GM12878 (cell line): ENCODE measurements at regions of chr2 and their contacts with region 1.

Region 1: GRCh38 chr2:60806988-60807681 is 51.1 kb downstream of the PAPOLG start:
- DNase-seq: peak; percentile 75
- ATAC-seq: peak; percentile 90
- H3K4me3 ChIP-seq: no peak overlapping the region
- H3K27ac ChIP-seq: peak overlapping the region; percentile 76
- H3K4me1 ChIP-seq: peaks cover 28% of the 10 kb centered on the region
- H3K27me3 ChIP-seq: no peaks in the 10 kb centered on the region
- CTCF ChIP-seq: no peak
- EP300 ChIP-seq: 0 out of 4 replicates have a peak, but pooled peaks of 1 of the 2 experiments have one; percentile 41
- POLR2A ChIP-seq: 0 out of 2 replicates have a peak, but pooled peaks have one; percentile 6
- RAD21 ChIP-seq: 0 out of 2 replicates have a peak, but pooled peaks have one; percentile 1

Region 2: GRCh38 chr2:60735496-60736250 is 71.5 kb before region 1 on chr2:
- CTCF ChIA-PET with region 1: no interaction called
- POLR2A ChIA-PET with region 1: no interaction called
- RAD21 ChIA-PET with region 1: no interaction called
- SMC1A ChIA-PET with region 1: no interaction called
- in situ Hi-C with region 1: no loop called
- intact Hi-C with region 1: no loop called
- DNase-seq: no peak
- ATAC-seq: peak; percentile 33
- H3K4me3 ChIP-seq: peak overlapping the region; percentile 28; the same call in 1 of the 2 replicates
- H3K27ac ChIP-seq: no peak overlapping the region
- H3K4me1 ChIP-seq: no peaks in the 10 kb centered on the region
- H3K27me3 ChIP-seq: peaks cover 1 to 9% of the 10 kb centered on the region in 2 experiments; a peak in 3 of 4 replicates
- CTCF ChIP-seq: no peak
- EP300 ChIP-seq: no peak
- POLR2A ChIP-seq: no peak
- RAD21 ChIP-seq: no peak

Region 3: GRCh38 chr2:60794277-60794863 is 12.8 kb before region 1 on chr2:
- CTCF ChIA-PET with region 1: interaction called, 8 read pairs
- POLR2A ChIA-PET with region 1: no interaction called
- RAD21 ChIA-PET with region 1: interaction called, 12 read pairs
- SMC1A ChIA-PET with region 1: interaction called, 14 read pairs
- in situ Hi-C with region 1: no loop called
- intact Hi-C with region 1: no loop called
- DNase-seq: no peak
- ATAC-seq: peak; percentile 51; the same call in 2 of the 3 replicates
- H3K4me3 ChIP-seq: no peak overlapping the region
- H3K27ac ChIP-seq: no peak overlapping the region
- H3K4me1 ChIP-seq: peaks cover 16% of the 10 kb centered on the region
- H3K27me3 ChIP-seq: no peaks in the 10 kb centered on the region
- CTCF ChIP-seq: peak; percentile 33 to 73 (median 55); a peak in 4 of 6 replicates
- EP300 ChIP-seq: no peak
- POLR2A ChIP-seq: no peak
- RAD21 ChIP-seq: peak; percentile 81

Region 4: GRCh38 chr2:60818272-60818671 is 11.1 kb after region 1 on chr2:
- CTCF ChIA-PET with region 1: interaction called, 19 read pairs
- POLR2A ChIA-PET with region 1: interaction called, 4 read pairs
- RAD21 ChIA-PET with region 1: interaction called, 6 read pairs
- SMC1A ChIA-PET with region 1: interaction called, 14 read pairs
- in situ Hi-C with region 1: no loop called
- intact Hi-C with region 1: no loop called
- DNase-seq: no peak
- ATAC-seq: peak; percentile 52
- H3K4me3 ChIP-seq: no peak overlapping the region
- H3K27ac ChIP-seq: no peak overlapping the region
- H3K4me1 ChIP-seq: no peaks in the 10 kb centered on the region; the same call in 1 of the 2 replicates
- H3K27me3 ChIP-seq: no peaks in the 10 kb centered on the region
- CTCF ChIP-seq: peak in 2 of 3 experiments; percentile 35 to 37; a peak in 4 of 6 replicates
- EP300 ChIP-seq: no peak
- POLR2A ChIP-seq: no peak
- RAD21 ChIP-seq: peak; percentile 55

Region 5: DNA sequence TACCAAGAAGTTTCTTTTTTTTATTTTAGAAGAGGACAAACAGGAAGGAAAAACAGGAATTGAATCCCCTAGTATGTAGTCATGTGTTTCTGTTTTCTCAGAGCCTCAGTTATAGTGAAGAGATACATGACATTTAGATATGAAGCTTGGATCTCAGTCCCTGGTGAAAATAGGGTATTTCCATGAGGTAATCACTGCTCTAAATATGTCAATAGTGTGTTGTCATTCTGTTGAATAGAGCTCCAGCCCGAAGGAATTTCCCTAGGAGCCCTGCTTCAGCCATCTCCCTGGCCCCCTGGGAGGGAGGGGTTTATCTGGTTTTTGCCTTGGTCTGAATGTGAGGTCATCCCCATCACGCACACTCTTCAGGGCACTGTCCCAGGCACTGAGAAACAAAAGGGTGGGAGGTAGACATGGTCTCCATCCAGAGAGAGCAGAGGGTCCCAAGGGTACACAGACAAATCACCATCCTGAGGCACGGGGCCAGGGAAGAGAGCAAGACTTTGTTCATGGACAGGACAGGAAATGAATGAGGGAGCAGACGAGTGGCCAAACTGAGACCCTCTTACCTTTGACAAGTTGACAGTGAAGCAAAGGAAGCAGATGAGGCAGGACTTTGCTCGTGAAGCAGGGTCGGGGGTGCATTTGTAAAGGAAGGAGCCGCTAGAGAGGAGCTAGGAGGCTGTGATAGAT is 27.3 kb after region 1 on chr2:
- CTCF ChIA-PET with region 1: interaction called, 14 read pairs
- POLR2A ChIA-PET with region 1: interaction called, 12 read pairs
- RAD21 ChIA-PET with region 1: interaction called, 19 read pairs
- SMC1A ChIA-PET with region 1: interaction called, 10 read pairs
- in situ Hi-C with region 1: no loop called
- intact Hi-C with region 1: loop called (anchors 1 kb)
- DNase-seq: peak; percentile 63
- ATAC-seq: peak; percentile 74
- H3K4me3 ChIP-seq: no peak overlapping the region
- H3K27ac ChIP-seq: peak overlapping the region; percentile 63
- H3K4me1 ChIP-seq: peaks cover 68% of the 10 kb centered on the region
- H3K27me3 ChIP-seq: no peaks in the 10 kb centered on the region
- CTCF ChIP-seq: no peak
- EP300 ChIP-seq: peak; percentile 47 to 79; a peak in 2 of 4 replicates
- POLR2A ChIP-seq: no peak
- RAD21 ChIP-seq: peak; percentile 16; the same call in 1 of the 2 replicates

Region 6: DNA sequence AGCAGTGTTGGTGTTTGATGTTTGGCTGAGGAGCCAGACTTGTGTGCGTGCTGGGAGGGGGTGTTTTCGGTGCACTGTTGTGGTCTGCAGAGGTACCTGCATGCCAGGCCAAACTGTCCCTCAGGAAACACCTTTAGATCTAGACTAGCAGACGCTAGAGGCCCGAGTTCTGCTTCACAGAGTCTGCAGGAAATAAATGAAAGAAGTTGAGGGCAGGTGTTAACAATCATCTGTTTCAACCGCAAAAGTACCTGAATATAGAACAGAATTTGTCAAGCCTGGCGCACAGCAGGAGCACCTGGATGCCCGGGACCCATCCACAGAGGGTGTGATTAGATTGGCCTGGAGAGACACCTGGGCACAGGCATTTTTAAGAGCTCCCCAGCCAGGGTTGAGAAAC is 33.7 kb after region 1 on chr2:
- CTCF ChIA-PET with region 1: interaction called, 14 read pairs
- POLR2A ChIA-PET with region 1: interaction called, 4 read pairs
- RAD21 ChIA-PET with region 1: interaction called, 19 read pairs
- SMC1A ChIA-PET with region 1: interaction called, 10 read pairs
- in situ Hi-C with region 1: no loop called
- intact Hi-C with region 1: no loop called
- DNase-seq: peak; percentile 86
- ATAC-seq: peak; percentile 63
- H3K4me3 ChIP-seq: peak overlapping the region; percentile 38; the same call in 1 of the 2 replicates
- H3K27ac ChIP-seq: peak overlapping the region; percentile 92
- H3K4me1 ChIP-seq: peaks cover 91% of the 10 kb centered on the region
- H3K27me3 ChIP-seq: no peaks in the 10 kb centered on the region
- CTCF ChIP-seq: no peak
- EP300 ChIP-seq: peak; percentile 30 to 54; a peak in 1 of 4 replicates
- POLR2A ChIP-seq: no peak
- RAD21 ChIP-seq: 0 out of 2 replicates have a peak, but pooled peaks have one; percentile 17

Region 7: GRCh38 chr2:60891180-60891579 is 84.0 kb after region 1 on chr2:
- CTCF ChIA-PET with region 1: interaction called, 3 read pairs
- POLR2A ChIA-PET with region 1: interaction called, 3 read pairs
- RAD21 ChIA-PET with region 1: interaction called, 5 read pairs
- SMC1A ChIA-PET with region 1: interaction called, 13 read pairs
- in situ Hi-C with region 1: no loop called
- intact Hi-C with region 1: no loop called
- DNase-seq: no peak
- ATAC-seq: peak; percentile 54
- H3K4me3 ChIP-seq: no peak overlapping the region
- H3K27ac ChIP-seq: no peak overlapping the region
- H3K4me1 ChIP-seq: peaks cover 9% of the 10 kb centered on the region
- H3K27me3 ChIP-seq: no peaks in the 10 kb centered on the region
- CTCF ChIP-seq: no peak
- EP300 ChIP-seq: no peak
- POLR2A ChIP-seq: no peak
- RAD21 ChIP-seq: no peak

Region 8: DNA sequence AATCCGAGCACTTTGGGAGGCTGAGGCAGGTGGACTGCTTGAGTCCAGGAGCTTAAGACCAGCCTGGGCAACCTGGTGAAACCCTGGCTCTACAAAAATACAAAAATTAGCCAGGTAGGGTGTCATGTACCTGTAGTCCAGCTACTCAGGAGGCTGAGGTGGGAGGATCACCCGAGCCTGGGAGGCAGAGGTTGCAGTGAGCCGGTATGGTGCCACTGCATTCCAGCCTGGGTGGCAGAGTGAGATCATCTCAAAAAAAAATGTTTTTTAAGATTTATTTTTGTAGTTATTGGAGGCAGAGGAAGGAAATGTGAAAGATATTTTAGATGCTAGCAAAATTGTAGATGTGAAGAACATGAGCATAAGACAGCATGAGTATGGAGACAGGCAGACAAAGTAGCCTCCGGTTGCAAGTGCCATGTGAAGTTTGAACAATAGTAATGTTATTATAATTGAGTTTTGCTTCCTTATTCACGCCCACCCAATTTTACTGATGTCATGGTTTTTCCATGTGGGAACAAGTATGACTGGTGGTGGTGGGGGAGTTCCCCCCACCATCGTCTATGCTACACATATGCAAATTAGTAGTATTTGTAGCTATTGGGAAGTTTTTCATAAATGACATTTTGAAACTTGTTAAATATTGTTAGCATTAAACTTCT is 92.2 kb after region 1 on chr2:
- CTCF ChIA-PET with region 1: no interaction called
- POLR2A ChIA-PET with region 1: no interaction called
- RAD21 ChIA-PET with region 1: interaction called, 10 read pairs
- SMC1A ChIA-PET with region 1: interaction called, 4 read pairs
- in situ Hi-C with region 1: no loop called
- intact Hi-C with region 1: no loop called
- DNase-seq: peak; percentile 37
- ATAC-seq: peak; percentile 68
- H3K4me3 ChIP-seq: no peak overlapping the region
- H3K27ac ChIP-seq: peak overlapping the region; percentile 47
- H3K4me1 ChIP-seq: peaks cover 13% of the 10 kb centered on the region
- H3K27me3 ChIP-seq: no peaks in the 10 kb centered on the region
- CTCF ChIP-seq: no peak
- EP300 ChIP-seq: peak; percentile 77 to 82
- POLR2A ChIP-seq: peak; percentile 32; the same call in 1 of the 2 replicates
- RAD21 ChIP-seq: no peak

Region 9: GRCh38 chr2:61144697-61145268 is 337.6 kb after region 1 on chr2:
- CTCF ChIA-PET with region 1: no interaction called
- POLR2A ChIA-PET with region 1: no interaction called
- RAD21 ChIA-PET with region 1: no interaction called
- SMC1A ChIA-PET with region 1: no interaction called
- in situ Hi-C with region 1: no loop called
- intact Hi-C with region 1: no loop called
- DNase-seq: peak; percentile 99
- ATAC-seq: peak; percentile 96
- H3K4me3 ChIP-seq: peak overlapping the region; percentile 89
- H3K27ac ChIP-seq: peak overlapping the region; percentile 74
- H3K4me1 ChIP-seq: no peaks in the 10 kb centered on the region
- H3K27me3 ChIP-seq: no peaks in the 10 kb centered on the region
- CTCF ChIP-seq: no peak
- EP300 ChIP-seq: no peak
- POLR2A ChIP-seq: peak; percentile 85
- RAD21 ChIP-seq: no peak

Region 10: DNA sequence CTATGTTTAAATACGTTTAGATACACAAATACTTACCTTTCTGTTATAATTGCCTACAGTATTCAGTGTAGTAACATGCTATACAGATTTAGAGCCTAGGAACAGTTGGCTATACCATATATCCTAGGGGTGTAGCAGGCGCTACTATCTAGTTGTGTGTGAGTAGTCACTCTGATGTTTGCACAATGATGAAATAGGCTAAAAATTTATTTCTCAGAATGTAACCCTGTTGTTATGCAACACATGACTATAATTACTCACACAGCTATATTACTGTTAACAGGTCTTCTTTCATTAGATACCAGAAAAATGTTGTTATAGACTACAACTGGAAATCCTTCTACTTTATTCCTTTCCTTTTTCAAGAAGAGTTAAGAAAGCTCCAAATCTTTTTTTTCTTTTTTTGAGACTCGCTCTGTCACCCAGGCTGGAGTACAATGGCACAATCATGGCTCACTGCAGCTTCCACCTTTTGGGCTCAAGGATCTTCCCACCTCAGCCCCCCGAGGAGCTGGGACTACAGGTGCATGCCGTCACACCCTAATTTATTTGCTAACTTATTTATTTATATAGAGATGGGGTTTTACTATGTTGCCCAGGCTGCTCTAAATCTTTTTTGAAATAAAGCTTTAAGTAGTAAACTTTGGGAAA is 403.3 kb after region 1 on chr2:
- CTCF ChIA-PET with region 1: no interaction called
- POLR2A ChIA-PET with region 1: no interaction called
- RAD21 ChIA-PET with region 1: no interaction called
- SMC1A ChIA-PET with region 1: no interaction called
- in situ Hi-C with region 1: no loop called
- intact Hi-C with region 1: no loop called
- DNase-seq: no peak
- ATAC-seq: no peak
- H3K4me3 ChIP-seq: no peak overlapping the region
- H3K27ac ChIP-seq: no peak overlapping the region
- H3K4me1 ChIP-seq: no peaks in the 10 kb centered on the region
- H3K27me3 ChIP-seq: no peaks in the 10 kb centered on the region
- CTCF ChIP-seq: no peak
- EP300 ChIP-seq: no peak
- POLR2A ChIP-seq: no peak
- RAD21 ChIP-seq: no peak